ENCODE measurements at regions of chr1 and their contacts with region 1.

Region 1: GRCh38 chr1:191049781-191050180 is 572.1 kb upstream of the BRINP3 start:
- DNase-seq: no peak
- ATAC-seq: no peak
- H3K4me3 ChIP-seq: no peak overlapping the region
- H3K27ac ChIP-seq: no peak overlapping the region
- H3K4me1 ChIP-seq: no peaks in the 10 kb centered on the region
- H3K27me3 ChIP-seq: no peaks in the 10 kb centered on the region
- CTCF ChIP-seq: no peak
- POLR2A ChIP-seq: no peak
- RAD21 ChIP-seq: no peak

Region 2: DNA sequence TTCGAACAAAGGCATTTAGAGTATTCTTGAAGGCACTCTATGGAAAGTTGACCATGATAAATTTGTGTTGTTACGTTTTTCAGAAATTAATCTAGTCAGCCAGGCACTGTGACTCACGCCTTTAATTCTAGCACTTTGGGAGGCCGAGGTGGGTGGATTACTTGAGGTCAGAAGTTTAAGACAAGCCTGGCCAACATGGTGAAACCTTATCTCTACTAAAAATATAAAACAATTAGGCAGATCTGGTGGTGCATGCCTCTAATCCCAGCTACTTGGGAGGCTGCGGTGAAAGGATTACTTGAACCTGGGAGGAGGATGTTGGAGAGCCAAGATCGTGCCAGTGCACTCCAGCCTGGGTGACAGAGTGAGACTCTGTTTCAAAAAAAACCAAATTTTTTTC is 441.5 kb before region 1 on chr1:
- CTCF ChIA-PET with region 1: no interaction called
- POLR2A ChIA-PET with region 1: no interaction called
- dilution Hi-C with region 1: no loop called
- in situ Hi-C with region 1: no loop called
- intact Hi-C with region 1: loop called (anchors 5 kb)
- DNase-seq: no peak
- ATAC-seq: no peak
- H3K4me3 ChIP-seq: no peak overlapping the region
- H3K27ac ChIP-seq: no peak overlapping the region
- H3K4me1 ChIP-seq: no peaks in the 10 kb centered on the region
- H3K27me3 ChIP-seq: no peaks in the 10 kb centered on the region
- CTCF ChIP-seq: no peak
- POLR2A ChIP-seq: no peak
- RAD21 ChIP-seq: no peak

Region 3: GRCh38 chr1:191582169-191582568 is 532.4 kb after region 1 on chr1:
- CTCF ChIA-PET with region 1: no interaction called
- POLR2A ChIA-PET with region 1: no interaction called
- dilution Hi-C with region 1: no loop called
- in situ Hi-C with region 1: no loop called
- intact Hi-C with region 1: no loop called
- DNase-seq: no peak
- ATAC-seq: no peak
- H3K4me3 ChIP-seq: no peak overlapping the region
- H3K27ac ChIP-seq: no peak overlapping the region
- H3K4me1 ChIP-seq: no peaks in the 10 kb centered on the region
- H3K27me3 ChIP-seq: no peaks in the 10 kb centered on the region
- CTCF ChIP-seq: no peak
- POLR2A ChIP-seq: no peak
- RAD21 ChIP-seq: no peak

Measured in IMR-90 (cell line).